ENCODE measurements at regions of chr2 and their contacts with region 1.

Region 1: GRCh38 chr2:199471443-199472057 is 13.8 kb upstream of the SATB2 start:
- DNase-seq: no peak
- H3K4me3 ChIP-seq: no peak overlapping the region
- H3K27ac ChIP-seq: no peak overlapping the region
- H3K27me3 ChIP-seq: peaks cover 60% of the 10 kb centered on the region
- CTCF ChIP-seq: peak; percentile 78

Region 2: DNA sequence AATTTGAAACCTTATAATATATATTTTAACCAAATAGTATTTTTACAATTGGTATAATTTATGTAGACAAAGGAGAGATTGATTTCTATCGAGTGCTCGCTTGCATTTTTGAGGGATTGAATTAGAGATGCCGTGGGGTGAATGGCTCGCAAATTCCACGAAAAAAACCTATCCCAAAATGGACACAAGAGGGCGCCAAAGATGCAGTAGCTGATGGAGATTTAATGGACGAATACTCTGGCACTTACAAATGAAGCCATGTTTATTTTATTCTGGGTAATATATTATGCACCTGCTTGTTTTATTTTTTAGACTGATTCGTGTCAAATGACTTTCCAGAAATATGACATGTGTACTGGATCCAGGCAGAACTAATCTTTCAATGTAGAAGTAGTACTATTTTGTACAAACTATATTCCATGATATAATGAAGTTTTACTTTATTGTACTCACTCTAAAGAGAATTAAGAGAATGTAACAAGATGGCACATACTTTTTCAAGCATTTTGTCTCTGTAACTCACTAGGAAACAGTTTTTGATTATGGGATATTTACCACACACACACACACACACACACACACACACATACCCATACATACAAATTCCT is 1161.8 kb before region 1 on chr2:
- CTCF ChIA-PET with region 1: interaction called, 24 read pairs
- POLR2A ChIA-PET with region 1: no interaction called
- DNase-seq: peak; percentile 10
- H3K4me3 ChIP-seq: no peak overlapping the region
- H3K27ac ChIP-seq: no peak overlapping the region
- H3K27me3 ChIP-seq: no peaks in the 10 kb centered on the region
- CTCF ChIP-seq: peak; percentile 91

Region 3: GRCh38 chr2:199524689-199525574 is 53.4 kb after region 1 on chr2:
- CTCF ChIA-PET with region 1: no interaction called
- POLR2A ChIA-PET with region 1: no interaction called
- DNase-seq: no peak
- H3K4me3 ChIP-seq: no peak overlapping the region
- H3K27ac ChIP-seq: no peak overlapping the region
- H3K27me3 ChIP-seq: no peaks in the 10 kb centered on the region
- CTCF ChIP-seq: no peak

Region 4: GRCh38 chr2:199646439-199646838 is 174.9 kb after region 1 on chr2:
- CTCF ChIA-PET with region 1: no interaction called
- POLR2A ChIA-PET with region 1: no interaction called
- DNase-seq: no peak
- H3K4me3 ChIP-seq: no peak overlapping the region
- H3K27ac ChIP-seq: no peak overlapping the region
- H3K27me3 ChIP-seq: no peaks in the 10 kb centered on the region
- CTCF ChIP-seq: no peak

Region 5: GRCh38 chr2:199791326-199791725 is 319.8 kb after region 1 on chr2:
- CTCF ChIA-PET with region 1: no interaction called
- POLR2A ChIA-PET with region 1: no interaction called
- DNase-seq: no peak
- H3K4me3 ChIP-seq: no peak overlapping the region
- H3K27ac ChIP-seq: no peak overlapping the region
- H3K27me3 ChIP-seq: no peaks in the 10 kb centered on the region
- CTCF ChIP-seq: no peak